Vagina (tissue), 2 donors: ENCODE measurements at regions of chr5 and their contacts with region 1.

Region 1: DNA sequence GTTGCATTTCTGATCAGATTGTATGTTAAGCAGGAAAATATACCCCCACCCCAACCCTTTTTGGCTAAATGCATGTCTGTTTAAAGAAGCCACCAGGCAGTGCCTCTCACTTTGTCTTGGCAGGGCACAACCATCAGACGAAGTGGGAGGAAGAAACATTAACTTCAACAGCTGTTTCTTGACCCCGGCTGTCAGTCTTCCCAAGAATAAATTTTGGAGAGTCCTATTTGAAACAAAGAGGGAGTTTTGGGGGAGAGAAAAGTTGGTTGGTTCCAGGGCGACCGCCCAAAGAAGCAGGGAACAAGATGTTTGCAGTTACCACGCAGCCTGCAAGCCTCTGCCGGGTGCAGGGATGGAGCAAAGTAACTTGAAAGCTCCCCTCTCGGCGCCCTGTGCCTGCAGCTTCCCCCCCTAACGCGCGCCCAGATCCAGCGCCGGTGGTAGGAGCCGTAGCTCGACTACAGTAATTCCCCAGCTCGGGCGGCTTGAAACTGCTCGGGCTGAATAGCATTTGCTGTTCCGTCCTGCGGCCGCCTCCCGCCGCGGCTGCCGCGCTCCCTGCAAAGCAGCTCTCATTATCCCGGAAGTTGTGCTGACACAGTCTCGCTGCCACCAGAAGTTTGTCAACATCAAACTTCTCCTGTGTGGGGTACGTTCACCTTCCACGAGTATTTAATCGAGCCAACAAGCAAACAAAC is 100.7 kb upstream of the SSBP2 start:
- DNase-seq: peak in 1 of 2 donors; percentile 97
- H3K4me3 ChIP-seq: peak overlapping the region; percentile 49 to 52
- H3K27ac ChIP-seq: peak overlapping the region; percentile 87
- H3K4me1 ChIP-seq: peaks cover 46% of the 10 kb centered on the region
- H3K27me3 ChIP-seq: no peaks in the 10 kb centered on the region
- CTCF ChIP-seq: no peak
- POLR2A ChIP-seq: peak in 1 of 2 donors; percentile 29

Region 2: GRCh38 chr5:81506900-81507588 is 344.6 kb before region 1 on chr5:
- intact Hi-C with region 1: loop called (anchors 5 kb)
- DNase-seq: peak in 1 of 2 donors; percentile 87
- H3K4me3 ChIP-seq: no peak overlapping the region
- H3K27ac ChIP-seq: peak overlapping the region; percentile 70
- H3K4me1 ChIP-seq: peaks cover 6% of the 10 kb centered on the region
- H3K27me3 ChIP-seq: no peaks in the 10 kb centered on the region
- CTCF ChIP-seq: peak; percentile 58 to 83 (median 77)
- POLR2A ChIP-seq: no peak

Region 3: GRCh38 chr5:81787474-81788242 is 64.0 kb before region 1 on chr5:
- intact Hi-C with region 1: loop called (anchors 2 kb)
- DNase-seq: no peak
- H3K4me3 ChIP-seq: peak overlapping the region; percentile 2 to 12
- H3K27ac ChIP-seq: peak overlapping the region; percentile 49
- H3K4me1 ChIP-seq: peaks cover 41% of the 10 kb centered on the region
- H3K27me3 ChIP-seq: no peaks in the 10 kb centered on the region
- CTCF ChIP-seq: no peak
- POLR2A ChIP-seq: no peak

Region 4: GRCh38 chr5:81971712-81972495 is 120.3 kb after region 1 on chr5 and contains the start of gene ATG10:
- intact Hi-C with region 1: loop called (anchors 10 kb)
- DNase-seq: peak in 1 of 2 donors; percentile 93
- H3K4me3 ChIP-seq: peak within 1 kb of the TSS; percentile 61 to 72
- H3K27ac ChIP-seq: peak within 1 kb of the TSS; percentile 97
- H3K4me1 ChIP-seq: peaks cover 10% of the 10 kb centered on the region
- H3K27me3 ChIP-seq: no peaks in the 10 kb centered on the region
- CTCF ChIP-seq: no peak
- POLR2A ChIP-seq: peak; percentile 59 to 97
- total RNA-seq, gene ATG10: 4.2 TPM